AG04449 (cell line): ENCODE measurements at regions of chr17 and their contacts with region 1.

Region 1: GRCh38 chr17:64658931-64659330 is 3.2 kb downstream of the SMURF2 start:
- DNase-seq: no peak
- H3K4me3 ChIP-seq: peak overlapping the region; percentile 1
- CTCF ChIP-seq: no peak

Region 2: DNA sequence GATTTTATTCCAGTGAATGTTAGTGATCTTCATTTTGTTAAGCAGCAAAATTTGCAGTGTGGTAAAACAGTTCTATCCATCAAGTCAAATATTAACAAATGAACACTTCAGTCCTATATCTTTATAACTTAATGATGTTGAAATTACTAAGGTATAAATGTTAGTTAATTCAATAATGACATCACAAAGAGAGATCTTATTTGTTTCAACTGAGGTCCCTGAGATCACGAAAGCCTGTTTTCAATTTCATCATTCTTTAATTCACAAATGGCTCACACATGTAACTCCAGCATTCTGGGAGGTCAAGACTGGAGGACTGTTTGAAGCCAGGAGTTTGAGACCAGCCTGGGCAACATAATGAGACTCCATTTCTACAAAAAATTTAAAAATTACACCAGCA is 10.7 kb before region 1 on chr17:
- CTCF ChIA-PET with region 1: interaction called, 16 read pairs
- POLR2A ChIA-PET with region 1: interaction called, 3 read pairs
- DNase-seq: no peak
- H3K4me3 ChIP-seq: no peak overlapping the region
- CTCF ChIP-seq: no peak

Region 3: GRCh38 chr17:64736804-64737492 is 78.0 kb after region 1 on chr17:
- CTCF ChIA-PET with region 1: interaction called, 45 read pairs
- POLR2A ChIA-PET with region 1: interaction called, 3 read pairs
- DNase-seq: no peak
- H3K4me3 ChIP-seq: no peak overlapping the region
- CTCF ChIP-seq: peak; percentile 42